PC-3 (cell line): ENCODE measurements at regions of chr1 and their contacts with region 1.

Region 1: GRCh38 chr1:234373064-234373958 is at the start of gene COA6:
- DNase-seq: peak; percentile 91
- ATAC-seq: peak; percentile 90
- H3K4me3 ChIP-seq: peak within 1 kb of the TSS; percentile 97
- H3K27ac ChIP-seq: peak within 1 kb of the TSS; percentile 96
- H3K4me1 ChIP-seq: peaks cover 19% of the 10 kb centered on the region
- H3K27me3 ChIP-seq: no peaks in the 10 kb centered on the region
- CTCF ChIP-seq: no peak
- total RNA-seq, gene COA6: 28.9 and 43.1 TPM in 2 replicates

Region 2: GRCh38 chr1:233721141-233721547 is 652.2 kb before region 1 on chr1:
- CTCF ChIA-PET with region 1: no interaction called
- POLR2A ChIA-PET with region 1: no interaction called
- intact Hi-C with region 1: no loop called
- DNase-seq: peak; percentile 50
- ATAC-seq: no peak
- H3K4me3 ChIP-seq: no peak overlapping the region
- H3K27ac ChIP-seq: no peak overlapping the region
- H3K4me1 ChIP-seq: peaks cover 4% of the 10 kb centered on the region; the same call in 1 of the 2 replicates
- H3K27me3 ChIP-seq: no peaks in the 10 kb centered on the region
- CTCF ChIP-seq: no peak

Region 3: GRCh38 chr1:234260578-234260977 is 112.7 kb before region 1 on chr1:
- CTCF ChIA-PET with region 1: no interaction called
- POLR2A ChIA-PET with region 1: no interaction called
- intact Hi-C with region 1: no loop called
- DNase-seq: peak; percentile 75
- ATAC-seq: peak; percentile 67
- H3K4me3 ChIP-seq: no peak overlapping the region
- H3K27ac ChIP-seq: peak overlapping the region; percentile 22
- H3K4me1 ChIP-seq: peaks cover 12% of the 10 kb centered on the region
- H3K27me3 ChIP-seq: no peaks in the 10 kb centered on the region
- CTCF ChIP-seq: no peak

Region 4: DNA sequence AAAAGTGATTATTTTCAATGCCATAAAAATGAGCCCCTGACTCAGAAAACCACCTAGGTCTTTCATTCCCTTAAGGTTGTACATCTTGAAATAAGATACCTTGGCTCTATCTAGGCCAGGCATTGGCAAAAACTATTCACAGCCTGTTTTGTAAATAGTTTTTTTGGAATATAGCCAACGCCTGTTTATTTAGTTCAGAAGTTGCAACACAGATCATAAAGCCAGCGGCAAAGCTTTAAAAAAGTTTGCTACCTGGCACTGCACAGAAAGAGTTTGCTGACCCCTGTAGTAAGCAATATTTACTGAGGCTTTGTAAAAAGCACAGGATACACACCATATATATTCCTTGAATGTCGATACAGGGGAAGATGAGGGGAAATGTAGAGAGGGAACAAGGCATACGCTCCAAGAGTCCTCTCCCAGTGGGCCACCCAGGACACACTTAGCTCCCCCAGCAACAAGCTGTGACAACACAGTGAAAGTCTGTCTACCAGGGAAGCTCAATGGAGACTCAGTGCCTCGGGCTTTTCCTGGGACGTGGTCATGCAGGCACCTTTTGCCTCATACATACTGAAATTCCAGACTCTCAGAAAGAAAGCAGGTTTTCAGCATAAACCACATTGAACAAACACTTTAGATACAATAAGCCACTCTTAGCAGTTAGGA is 85.2 kb after region 1 on chr1:
- CTCF ChIA-PET with region 1: no interaction called
- POLR2A ChIA-PET with region 1: interaction called, 5 read pairs
- intact Hi-C with region 1: loop called (anchors 10 kb)
- DNase-seq: peak; percentile 75
- ATAC-seq: peak; percentile 80
- H3K4me3 ChIP-seq: no peak overlapping the region
- H3K27ac ChIP-seq: peak overlapping the region; percentile 29
- H3K4me1 ChIP-seq: peaks cover 16% of the 10 kb centered on the region
- H3K27me3 ChIP-seq: no peaks in the 10 kb centered on the region
- CTCF ChIP-seq: peak; percentile 21; the same call in 1 of the 2 replicates

Region 5: GRCh38 chr1:234683861-234684632 is 310.7 kb after region 1 on chr1:
- CTCF ChIA-PET with region 1: no interaction called
- POLR2A ChIA-PET with region 1: no interaction called
- intact Hi-C with region 1: loop called (anchors 5 kb)
- DNase-seq: peak; percentile 65
- ATAC-seq: peak; percentile 61; the same call in 1 of the 2 replicates
- H3K4me3 ChIP-seq: no peak overlapping the region
- H3K27ac ChIP-seq: no peak overlapping the region
- H3K4me1 ChIP-seq: peaks cover 4% of the 10 kb centered on the region; the same call in 1 of the 2 replicates
- H3K27me3 ChIP-seq: no peaks in the 10 kb centered on the region
- CTCF ChIP-seq: no peak